ENCODE measurements at regions of chr10 and their contacts with region 1.

Region 1: GRCh38 chr10:114703377-114704107 is 45.5 kb upstream of the ABLIM1 start:
- DNase-seq: no peak
- H3K4me3 ChIP-seq: no peak overlapping the region
- H3K27ac ChIP-seq: no peak overlapping the region
- H3K4me1 ChIP-seq: no peaks in the 10 kb centered on the region
- H3K27me3 ChIP-seq: no peaks in the 10 kb centered on the region
- CTCF ChIP-seq: peak in 3 of 4 experiments; percentile 23 to 28 (median 26)
- EP300 ChIP-seq: no peak
- POLR2A ChIP-seq: no peak

Region 2: DNA sequence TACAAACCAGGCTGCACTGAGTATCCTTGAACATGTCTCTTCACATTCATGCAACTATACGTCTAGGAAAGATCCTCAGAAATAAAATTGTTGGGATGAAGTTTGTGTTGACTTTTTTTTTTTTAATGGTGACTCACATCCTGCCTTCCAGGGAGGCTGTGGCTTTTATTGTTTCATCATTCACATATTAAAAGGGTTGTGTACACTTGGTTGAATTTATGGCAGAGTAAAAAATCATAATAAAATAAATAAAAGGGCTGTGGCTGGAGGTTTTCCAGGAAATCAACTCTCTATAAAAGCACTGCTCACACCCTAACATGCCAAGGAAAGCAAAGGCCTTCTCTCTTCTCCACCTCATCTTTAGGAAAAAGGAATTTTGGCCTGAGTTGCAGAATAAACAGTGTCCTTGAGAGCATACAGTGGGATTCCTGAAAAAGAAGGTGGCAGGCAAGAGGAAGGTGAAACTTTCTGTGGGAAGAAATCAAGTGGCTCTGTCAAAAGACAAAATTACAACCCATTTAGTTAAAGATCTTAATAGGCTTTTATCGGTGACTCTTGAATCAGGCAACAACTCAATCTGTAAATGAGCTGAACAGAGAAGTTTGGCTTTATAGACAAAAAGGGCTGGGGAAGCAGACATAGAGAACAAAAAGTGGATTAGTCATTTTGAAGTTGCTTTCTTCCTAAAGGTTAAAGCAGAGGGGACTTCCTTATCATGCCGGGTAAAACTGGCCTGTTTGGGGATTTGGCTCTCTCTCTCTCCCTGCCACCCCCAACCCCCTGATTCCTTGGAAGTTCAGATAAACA is 76.5 kb after region 1 on chr10:
- intact Hi-C with region 1: loop called (anchors 10 kb)
- DNase-seq: no peak
- H3K4me3 ChIP-seq: no peak overlapping the region
- H3K27ac ChIP-seq: peak overlapping the region in 3 of 4 donors; percentile 45 to 52 (median 51)
- H3K4me1 ChIP-seq: peaks cover 0 to 13% (median 6%) of the 10 kb centered on the region in 4 donors
- H3K27me3 ChIP-seq: no peaks in the 10 kb centered on the region
- CTCF ChIP-seq: no peak
- EP300 ChIP-seq: no peak
- POLR2A ChIP-seq: no peak